ENCODE measurements at regions of chr1 and their contacts with region 1.

Region 1: DNA sequence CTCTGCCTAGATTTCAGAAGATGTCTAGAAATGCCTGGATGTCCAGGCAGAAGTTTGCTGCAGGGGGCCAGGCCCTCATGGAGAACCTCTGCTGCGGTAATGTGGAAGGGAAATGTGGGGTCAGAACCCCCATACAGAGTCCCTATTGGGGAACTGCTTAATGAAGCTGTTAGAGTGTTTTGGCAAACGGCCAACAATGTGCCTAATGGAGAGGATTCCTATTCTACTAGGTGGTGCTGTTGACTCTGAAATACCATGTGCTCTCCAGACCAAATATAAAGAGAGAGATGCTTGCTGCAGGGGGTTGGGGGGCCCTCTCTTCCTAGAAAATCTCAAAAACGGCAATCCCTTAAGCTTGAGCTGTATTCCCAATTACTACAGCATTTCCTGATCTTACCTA is 57.1 kb upstream of the DR1 start:
- DNase-seq: peak; percentile 38 to 42
- H3K4me3 ChIP-seq: no peak overlapping the region
- H3K27ac ChIP-seq: no peak overlapping the region
- H3K4me1 ChIP-seq: no peaks in the 10 kb centered on the region
- H3K27me3 ChIP-seq: no peaks in the 10 kb centered on the region
- CTCF ChIP-seq: no peak
- POLR2A ChIP-seq: no peak

Region 2: DNA sequence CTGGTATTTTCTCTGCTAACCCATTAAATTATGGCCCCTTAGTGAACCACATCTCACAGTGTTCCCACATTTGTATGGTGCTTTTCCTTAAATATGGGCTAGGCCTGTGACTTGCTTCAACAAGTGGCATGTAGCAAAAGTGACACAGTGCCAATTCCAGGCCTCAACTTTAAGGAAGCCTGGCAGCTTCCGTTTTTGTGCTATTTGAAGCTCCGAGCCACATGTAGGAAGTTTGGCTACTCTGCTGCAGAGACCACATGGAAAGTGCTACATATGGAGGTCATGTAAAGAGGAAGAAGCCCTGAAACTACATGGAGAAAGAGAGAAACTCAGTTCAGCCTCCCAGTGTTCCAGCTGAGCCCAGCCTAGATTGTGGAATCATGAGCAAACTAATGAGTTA is 28.6 kb after region 1 on chr1:
- intact Hi-C with region 1: loop called (anchors 2 kb)
- DNase-seq: peak; percentile 2 to 4
- H3K4me3 ChIP-seq: no peak overlapping the region
- H3K27ac ChIP-seq: no peak overlapping the region
- H3K4me1 ChIP-seq: no peaks in the 10 kb centered on the region
- H3K27me3 ChIP-seq: no peaks in the 10 kb centered on the region
- CTCF ChIP-seq: no peak
- POLR2A ChIP-seq: no peak